ENCODE measurements at regions of chr14 and their contacts with region 1.

Region 1: GRCh38 chr14:23910101-23910875 is 43.3 kb upstream of the DHRS4 start:
- DNase-seq: peak; percentile 6 to 33 (median 28)
- H3K4me3 ChIP-seq: no peak overlapping the region
- H3K4me3 Mint-ChIP-seq: no peak overlapping the region
- H3K27ac ChIP-seq: no peak overlapping the region
- H3K27ac Mint-ChIP-seq: no peak overlapping the region
- H3K4me1 ChIP-seq: no peaks in the 10 kb centered on the region
- H3K4me1 Mint-ChIP-seq: peaks cover 7% of the 10 kb centered on the region
- H3K27me3 ChIP-seq: no peaks in the 10 kb centered on the region
- H3K27me3 Mint-ChIP-seq: peaks cover 0 to 9% (median 3%) of the 10 kb centered on the region in 3 donors
- CTCF ChIP-seq: peak; percentile 87

Region 2: DNA sequence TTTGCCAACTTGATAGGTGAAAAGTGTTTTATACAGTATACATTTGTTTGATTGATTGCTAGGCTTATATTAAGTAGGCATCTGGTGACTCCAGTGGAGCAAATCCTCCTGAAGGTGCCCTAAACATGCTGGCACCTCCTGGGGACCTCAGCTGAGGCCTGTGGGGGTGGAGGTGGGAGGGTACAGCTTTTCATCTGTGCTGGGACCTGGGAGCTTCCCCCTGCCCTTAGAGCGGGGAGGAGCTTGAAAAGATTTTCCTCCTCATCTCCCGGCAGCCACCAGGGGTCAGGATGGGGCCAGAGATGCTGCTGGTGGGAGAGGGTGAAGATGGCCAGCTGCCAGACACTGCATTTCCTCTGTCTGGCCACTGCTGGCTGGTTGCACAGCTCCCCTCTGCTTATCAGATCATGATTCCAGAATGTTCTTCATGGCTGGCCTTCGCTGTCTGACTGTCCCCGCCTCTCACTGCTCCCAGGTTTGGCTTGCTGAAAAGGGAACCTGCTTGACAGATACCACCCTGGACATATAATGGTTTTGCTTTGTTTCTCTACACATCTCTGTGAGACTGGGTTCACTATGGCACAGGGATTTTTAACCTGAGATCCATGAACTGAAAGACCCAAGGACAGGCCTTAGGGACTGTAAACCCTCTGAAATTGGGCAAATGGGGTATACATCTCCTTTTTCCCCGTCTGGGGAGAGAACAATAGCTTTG is 321.2 kb before region 1 on chr14:
- intact Hi-C with region 1: loop called in 1 of 2 experiments (anchors 5 kb)
- DNase-seq: peak; percentile 81 to 85 (median 81)
- H3K4me3 ChIP-seq: no peak overlapping the region
- H3K4me3 Mint-ChIP-seq: no peak overlapping the region
- H3K27ac ChIP-seq: no peak overlapping the region
- H3K27ac Mint-ChIP-seq: no peak overlapping the region
- H3K4me1 ChIP-seq: peaks cover 5 to 7% of the 10 kb centered on the region in 2 donors
- H3K4me1 Mint-ChIP-seq: peaks cover 5% of the 10 kb centered on the region
- H3K27me3 ChIP-seq: peaks cover 0 to 2% of the 10 kb centered on the region in 2 donors
- H3K27me3 Mint-ChIP-seq: peaks cover 2 to 21% (median 11%) of the 10 kb centered on the region in 3 donors
- CTCF ChIP-seq: peak; percentile 75

Region 3: GRCh38 chr14:23631702-23632460 is 278.4 kb before region 1 on chr14:
- intact Hi-C with region 1: loop called in 1 of 2 experiments (anchors 5 kb)
- DNase-seq: peak; percentile 32 to 57 (median 51)
- H3K4me3 ChIP-seq: no peak overlapping the region
- H3K4me3 Mint-ChIP-seq: peak overlapping the region in 1 of 2 donors; percentile 56
- H3K27ac ChIP-seq: no peak overlapping the region
- H3K27ac Mint-ChIP-seq: peak overlapping the region in 2 of 7 donors; percentile 1 to 41
- H3K4me1 ChIP-seq: no peaks in the 10 kb centered on the region
- H3K4me1 Mint-ChIP-seq: peaks cover 9% of the 10 kb centered on the region
- H3K27me3 ChIP-seq: no peaks in the 10 kb centered on the region
- H3K27me3 Mint-ChIP-seq: peaks cover 6 to 10% (median 9%) of the 10 kb centered on the region in 3 donors
- CTCF ChIP-seq: peak; percentile 97

Region 4: GRCh38 chr14:23727566-23728335 is 182.5 kb before region 1 on chr14:
- intact Hi-C with region 1: loop called (anchors 5 kb)
- DNase-seq: peak; percentile 9 to 24 (median 18)
- H3K4me3 ChIP-seq: no peak overlapping the region
- H3K4me3 Mint-ChIP-seq: no peak overlapping the region
- H3K27ac ChIP-seq: no peak overlapping the region
- H3K27ac Mint-ChIP-seq: no peak overlapping the region
- H3K4me1 ChIP-seq: no peaks in the 10 kb centered on the region
- H3K4me1 Mint-ChIP-seq: no peaks in the 10 kb centered on the region
- H3K27me3 ChIP-seq: no peaks in the 10 kb centered on the region
- H3K27me3 Mint-ChIP-seq: peaks cover 0 to 3% (median 1%) of the 10 kb centered on the region in 3 donors
- CTCF ChIP-seq: peak; percentile 60

Region 5: GRCh38 chr14:23793532-23793931 is 116.8 kb before region 1 on chr14:
- intact Hi-C with region 1: no loop called
- DNase-seq: no peak
- H3K4me3 ChIP-seq: no peak overlapping the region
- H3K4me3 Mint-ChIP-seq: no peak overlapping the region
- H3K27ac ChIP-seq: no peak overlapping the region
- H3K27ac Mint-ChIP-seq: no peak overlapping the region
- H3K4me1 ChIP-seq: no peaks in the 10 kb centered on the region
- H3K4me1 Mint-ChIP-seq: no peaks in the 10 kb centered on the region
- H3K27me3 ChIP-seq: no peaks in the 10 kb centered on the region
- H3K27me3 Mint-ChIP-seq: peaks cover 0 to 2% (median under 1%) of the 10 kb centered on the region in 3 donors
- CTCF ChIP-seq: no peak

Measured in CD14-positive monocyte (primary cell).